GM12878 (cell line): ENCODE measurements at regions of chr17 and their contacts with region 1.

Region 1: DNA sequence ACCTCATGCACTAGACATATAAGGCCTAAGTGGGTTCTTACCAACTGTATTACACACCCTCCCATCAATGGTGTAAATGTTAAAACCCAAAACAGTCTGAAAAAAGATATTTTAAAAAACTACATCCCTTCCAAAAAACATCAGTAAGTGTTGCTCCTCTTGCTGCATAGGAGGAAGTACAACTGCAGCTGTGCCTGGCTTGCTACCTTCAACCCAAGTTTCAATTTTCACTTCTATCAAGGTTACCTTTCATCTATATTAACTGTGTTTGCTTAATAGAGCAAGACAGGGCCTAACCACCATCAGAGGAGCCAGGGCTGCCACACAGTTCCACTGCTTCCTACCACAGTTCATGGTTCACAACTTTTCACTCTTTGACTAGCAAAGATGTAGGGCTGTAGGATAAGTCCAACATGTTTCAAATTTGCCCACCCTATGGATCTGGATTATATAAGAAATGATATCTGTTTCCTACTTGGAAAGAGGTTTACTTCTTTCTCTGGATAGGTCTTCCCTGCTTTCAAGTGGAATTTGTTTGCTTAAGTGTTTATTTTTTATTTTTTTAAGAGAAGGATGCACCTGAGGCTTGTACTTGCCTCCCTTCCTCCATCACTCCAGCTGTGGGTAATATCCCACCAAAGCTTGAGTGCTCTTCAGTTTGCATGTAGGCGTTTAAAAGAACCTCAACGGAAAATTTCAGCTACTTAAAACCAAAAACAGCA is 56.7 kb downstream of the GRB7 start:
- DNase-seq: peak; percentile 95
- ATAC-seq: peak; percentile 98
- H3K4me3 ChIP-seq: peak overlapping the region; percentile 50
- H3K27ac ChIP-seq: peak overlapping the region; percentile 93
- H3K4me1 ChIP-seq: peaks cover 63% of the 10 kb centered on the region
- H3K27me3 ChIP-seq: no peaks in the 10 kb centered on the region
- CTCF ChIP-seq: no peak
- EP300 ChIP-seq: peak; percentile 46 to 76; a peak in 3 of 4 replicates
- POLR2A ChIP-seq: peak; percentile 53; the same call in 1 of the 2 replicates
- RAD21 ChIP-seq: 0 out of 2 replicates have a peak, but pooled peaks have one; percentile 2

Region 2: DNA sequence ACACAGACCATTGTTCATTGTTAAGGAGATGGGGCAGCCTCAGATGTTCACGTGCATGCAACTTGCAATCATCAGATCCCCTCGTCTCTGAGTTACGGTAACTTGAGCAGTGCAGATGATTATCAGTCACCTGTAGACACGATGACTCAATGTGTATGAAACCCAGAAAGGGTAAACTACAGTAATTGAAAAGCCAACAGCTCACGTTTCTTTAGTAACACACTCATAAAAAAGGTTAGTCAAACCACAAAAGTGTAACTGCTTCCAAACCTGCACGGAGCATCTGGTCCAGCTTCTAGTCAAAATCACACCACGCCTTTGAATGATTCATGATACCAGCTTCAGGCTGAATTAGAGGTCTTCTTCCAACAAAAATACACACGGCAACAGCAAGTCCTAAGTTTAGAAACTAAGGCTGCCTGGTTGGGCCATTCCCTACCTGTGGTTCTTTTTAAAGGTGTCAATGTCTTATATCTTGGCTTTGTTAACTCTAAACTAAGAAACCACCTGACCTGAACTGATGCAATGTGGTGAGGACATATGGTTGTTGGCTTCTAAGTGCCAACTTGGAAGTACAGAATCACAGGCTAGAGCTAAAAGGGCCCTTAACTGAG is 24.3 kb before region 1 on chr17:
- CTCF ChIA-PET with region 1: interaction called, 7 read pairs
- POLR2A ChIA-PET with region 1: interaction called, 39 read pairs
- RAD21 ChIA-PET with region 1: interaction called, 41 read pairs
- SMC1A ChIA-PET with region 1: interaction called, 60 read pairs
- in situ Hi-C with region 1: no loop called
- intact Hi-C with region 1: no loop called
- DNase-seq: peak; percentile 84
- ATAC-seq: peak; percentile 81
- H3K4me3 ChIP-seq: peak overlapping the region; percentile 79; the same call in 1 of the 2 replicates
- H3K27ac ChIP-seq: peak overlapping the region; percentile 95
- H3K4me1 ChIP-seq: peaks cover 85% of the 10 kb centered on the region
- H3K27me3 ChIP-seq: no peaks in the 10 kb centered on the region
- CTCF ChIP-seq: no peak
- EP300 ChIP-seq: peak; percentile 76 to 92
- POLR2A ChIP-seq: no peak; the same call in 1 of the 2 replicates
- RAD21 ChIP-seq: no peak

Region 3: GRCh38 chr17:39777534-39778365 is 16.7 kb before region 1 on chr17:
- CTCF ChIA-PET with region 1: interaction called, 38 read pairs
- POLR2A ChIA-PET with region 1: interaction called, 39 read pairs
- RAD21 ChIA-PET with region 1: interaction called, 41 read pairs
- SMC1A ChIA-PET with region 1: interaction called, 60 read pairs
- in situ Hi-C with region 1: no loop called
- intact Hi-C with region 1: no loop called
- DNase-seq: peak; percentile 73
- ATAC-seq: peak; percentile 68
- H3K4me3 ChIP-seq: peak overlapping the region; percentile 79
- H3K27ac ChIP-seq: peak overlapping the region; percentile 95
- H3K4me1 ChIP-seq: peaks cover 44% of the 10 kb centered on the region
- H3K27me3 ChIP-seq: no peaks in the 10 kb centered on the region
- CTCF ChIP-seq: no peak
- EP300 ChIP-seq: peak; percentile 40 to 58; a peak in 2 of 4 replicates
- POLR2A ChIP-seq: peak; percentile 43; the same call in 1 of the 2 replicates
- RAD21 ChIP-seq: no peak

Region 4: GRCh38 chr17:39808409-39808997 is 14.1 kb after region 1 on chr17:
- CTCF ChIA-PET with region 1: interaction called, 6 read pairs
- POLR2A ChIA-PET with region 1: interaction called, 6 read pairs
- RAD21 ChIA-PET with region 1: no interaction called
- SMC1A ChIA-PET with region 1: interaction called, 38 read pairs
- in situ Hi-C with region 1: no loop called
- intact Hi-C with region 1: no loop called
- DNase-seq: no peak
- ATAC-seq: peak; percentile 52
- H3K4me3 ChIP-seq: no peak overlapping the region
- H3K27ac ChIP-seq: peak overlapping the region; percentile 12; the same call in 1 of the 2 replicates
- H3K4me1 ChIP-seq: peaks cover 9% of the 10 kb centered on the region; the same call in 1 of the 2 replicates
- H3K27me3 ChIP-seq: no peaks in the 10 kb centered on the region
- CTCF ChIP-seq: no peak
- EP300 ChIP-seq: no peak
- POLR2A ChIP-seq: no peak
- RAD21 ChIP-seq: no peak

Region 5: GRCh38 chr17:39822051-39822451 is 27.6 kb after region 1 on chr17:
- CTCF ChIA-PET with region 1: interaction called, 3 read pairs
- POLR2A ChIA-PET with region 1: interaction called, 9 read pairs
- RAD21 ChIA-PET with region 1: interaction called, 27 read pairs
- SMC1A ChIA-PET with region 1: interaction called, 28 read pairs
- in situ Hi-C with region 1: no loop called
- intact Hi-C with region 1: no loop called
- DNase-seq: no peak
- ATAC-seq: peak; percentile 25
- H3K4me3 ChIP-seq: no peak overlapping the region
- H3K27ac ChIP-seq: peak overlapping the region; percentile 65
- H3K4me1 ChIP-seq: peaks cover 42% of the 10 kb centered on the region
- H3K27me3 ChIP-seq: no peaks in the 10 kb centered on the region
- CTCF ChIP-seq: no peak
- EP300 ChIP-seq: no peak
- POLR2A ChIP-seq: no peak
- RAD21 ChIP-seq: no peak